ENCODE measurements at regions of chr11 and their contacts with region 1.

Region 1: GRCh38 chr11:96342961-96343711 is at the start of gene MAML2:
- DNase-seq: peak; percentile 83 to 97 (median 89)
- ATAC-seq: peak; percentile 88
- H3K4me3 ChIP-seq: peak within 1 kb of the TSS; percentile 92
- H3K4me3 Mint-ChIP-seq: peak within 1 kb of the TSS; percentile 97
- H3K27ac ChIP-seq: peak within 1 kb of the TSS; percentile 45 to 86
- H3K27ac Mint-ChIP-seq: peak within 1 kb of the TSS; percentile 87
- H3K4me1 ChIP-seq: peaks cover 43% of the 10 kb centered on the region
- H3K4me1 Mint-ChIP-seq: peaks cover 32% of the 10 kb centered on the region
- H3K27me3 ChIP-seq: no peaks in the 10 kb centered on the region
- H3K27me3 Mint-ChIP-seq: no peaks in the 10 kb centered on the region
- CTCF ChIP-seq: peak; percentile 96
- total RNA-seq, gene MAML2: 58.8 to 59.8 TPM

Region 2: DNA sequence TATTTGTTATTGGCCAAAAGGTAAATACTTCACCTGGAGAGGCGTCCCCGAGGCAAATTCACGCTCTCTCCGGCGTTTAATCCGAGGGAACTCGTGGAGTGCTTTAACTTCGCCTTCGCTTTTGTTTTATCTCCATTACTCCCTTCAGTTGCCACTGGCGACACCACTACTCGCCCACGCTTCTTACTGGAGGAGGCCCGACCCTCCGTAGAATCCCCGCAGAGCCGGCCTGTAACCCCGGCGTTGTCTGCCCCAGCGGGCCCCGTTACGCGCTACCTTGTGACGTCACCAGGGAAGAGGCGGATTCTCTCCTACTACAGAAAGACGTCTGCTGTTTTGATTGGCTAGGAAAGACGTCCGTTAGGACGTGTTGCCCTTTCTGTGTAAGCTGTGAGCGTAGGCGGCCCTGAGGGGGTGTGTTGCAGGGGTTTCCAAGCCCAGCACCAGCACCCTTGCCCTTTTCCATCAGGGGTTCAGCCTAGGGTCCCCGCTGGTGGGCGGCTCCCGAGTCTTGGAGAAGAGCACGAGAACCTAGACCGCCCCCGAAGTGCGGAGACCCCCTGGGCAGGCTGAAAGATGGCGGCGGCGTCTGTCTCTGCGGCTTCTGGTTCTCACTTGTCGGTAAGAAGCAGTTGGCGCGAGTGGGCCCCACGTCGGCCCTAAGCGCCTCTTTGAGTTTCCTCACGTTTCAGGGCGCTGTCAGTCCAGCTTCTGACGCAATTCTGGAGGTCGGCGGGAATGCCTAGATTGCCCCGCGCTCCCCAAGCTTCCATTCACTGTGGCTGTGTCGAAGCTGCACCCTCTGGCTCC is 552.8 kb before region 1 on chr11 and contains the start of gene CEP57:
- CTCF ChIA-PET with region 1: no interaction called
- POLR2A ChIA-PET with region 1: interaction called, 14 read pairs
- intact Hi-C with region 1: no loop called
- DNase-seq: peak; percentile 87 to 97 (median 90)
- ATAC-seq: peak; percentile 54
- H3K4me3 ChIP-seq: peak within 1 kb of the TSS; percentile 93
- H3K4me3 Mint-ChIP-seq: peak within 1 kb of the TSS; percentile 96
- H3K27ac ChIP-seq: peak within 1 kb of the TSS; percentile 99 to 100
- H3K27ac Mint-ChIP-seq: peak within 1 kb of the TSS; percentile 100
- H3K4me1 ChIP-seq: peaks cover 24% of the 10 kb centered on the region
- H3K4me1 Mint-ChIP-seq: peaks cover 61% of the 10 kb centered on the region
- H3K27me3 ChIP-seq: no peaks in the 10 kb centered on the region
- H3K27me3 Mint-ChIP-seq: no peaks in the 10 kb centered on the region
- CTCF ChIP-seq: no peak
- total RNA-seq, gene CEP57: 43.5 to 46.6 TPM

Region 3: GRCh38 chr11:96054870-96055705 is 288.0 kb before region 1 on chr11:
- CTCF ChIA-PET with region 1: interaction called, 24 read pairs
- POLR2A ChIA-PET with region 1: interaction called, 48 read pairs
- intact Hi-C with region 1: loop called (anchors 1 to 2 kb)
- DNase-seq: peak in 3 of 14 experiments; percentile 55 to 57 (median 57)
- ATAC-seq: peak; percentile 76
- H3K4me3 ChIP-seq: no peak overlapping the region
- H3K4me3 Mint-ChIP-seq: no peak overlapping the region
- H3K27ac ChIP-seq: no peak overlapping the region
- H3K27ac Mint-ChIP-seq: peak overlapping the region; percentile 26
- H3K4me1 ChIP-seq: peaks cover 2% of the 10 kb centered on the region
- H3K4me1 Mint-ChIP-seq: peaks cover 83% of the 10 kb centered on the region
- H3K27me3 ChIP-seq: no peaks in the 10 kb centered on the region
- H3K27me3 Mint-ChIP-seq: no peaks in the 10 kb centered on the region
- CTCF ChIP-seq: peak; percentile 65

Region 4: GRCh38 chr11:96207459-96208449 is 135.4 kb before region 1 on chr11:
- CTCF ChIA-PET with region 1: interaction called, 7 read pairs
- POLR2A ChIA-PET with region 1: interaction called, 51 read pairs
- intact Hi-C with region 1: loop called (anchors 5 kb)
- DNase-seq: peak in 10 of 14 experiments; percentile 12 to 84 (median 32)
- ATAC-seq: peak; percentile 68
- H3K4me3 ChIP-seq: peak overlapping the region; percentile 22
- H3K4me3 Mint-ChIP-seq: peak overlapping the region; percentile 72
- H3K27ac ChIP-seq: peak overlapping the region; percentile 62 to 78
- H3K27ac Mint-ChIP-seq: peak overlapping the region; percentile 94
- H3K4me1 ChIP-seq: peaks cover 57% of the 10 kb centered on the region
- H3K4me1 Mint-ChIP-seq: peaks cover 86% of the 10 kb centered on the region
- H3K27me3 ChIP-seq: no peaks in the 10 kb centered on the region
- H3K27me3 Mint-ChIP-seq: no peaks in the 10 kb centered on the region
- CTCF ChIP-seq: no peak

Region 5: GRCh38 chr11:96242971-96243647 is 100.0 kb before region 1 on chr11:
- CTCF ChIA-PET with region 1: interaction called, 38 read pairs
- POLR2A ChIA-PET with region 1: interaction called, 20 read pairs
- intact Hi-C with region 1: no loop called
- DNase-seq: peak; percentile 51 to 90 (median 68)
- ATAC-seq: peak; percentile 83
- H3K4me3 ChIP-seq: peak overlapping the region; percentile 57
- H3K4me3 Mint-ChIP-seq: peak overlapping the region; percentile 92
- H3K27ac ChIP-seq: peak overlapping the region; percentile 58 to 76
- H3K27ac Mint-ChIP-seq: peak overlapping the region; percentile 99
- H3K4me1 ChIP-seq: peaks cover 35% of the 10 kb centered on the region
- H3K4me1 Mint-ChIP-seq: peaks cover 69% of the 10 kb centered on the region
- H3K27me3 ChIP-seq: no peaks in the 10 kb centered on the region
- H3K27me3 Mint-ChIP-seq: no peaks in the 10 kb centered on the region
- CTCF ChIP-seq: no peak

Region 6: GRCh38 chr11:96279018-96279895 is 63.9 kb before region 1 on chr11:
- CTCF ChIA-PET with region 1: interaction called, 15 read pairs
- POLR2A ChIA-PET with region 1: interaction called, 4 read pairs
- intact Hi-C with region 1: loop called in 1 of 2 experiments (anchors 5 kb)
- DNase-seq: peak in 1 of 14 experiments; percentile 42
- ATAC-seq: peak; percentile 70
- H3K4me3 ChIP-seq: no peak overlapping the region
- H3K4me3 Mint-ChIP-seq: peak overlapping the region; percentile 18
- H3K27ac ChIP-seq: no peak overlapping the region
- H3K27ac Mint-ChIP-seq: peak overlapping the region; percentile 48
- H3K4me1 ChIP-seq: peaks cover 10% of the 10 kb centered on the region
- H3K4me1 Mint-ChIP-seq: peaks cover 75% of the 10 kb centered on the region
- H3K27me3 ChIP-seq: no peaks in the 10 kb centered on the region
- H3K27me3 Mint-ChIP-seq: no peaks in the 10 kb centered on the region
- CTCF ChIP-seq: no peak

Region 7: DNA sequence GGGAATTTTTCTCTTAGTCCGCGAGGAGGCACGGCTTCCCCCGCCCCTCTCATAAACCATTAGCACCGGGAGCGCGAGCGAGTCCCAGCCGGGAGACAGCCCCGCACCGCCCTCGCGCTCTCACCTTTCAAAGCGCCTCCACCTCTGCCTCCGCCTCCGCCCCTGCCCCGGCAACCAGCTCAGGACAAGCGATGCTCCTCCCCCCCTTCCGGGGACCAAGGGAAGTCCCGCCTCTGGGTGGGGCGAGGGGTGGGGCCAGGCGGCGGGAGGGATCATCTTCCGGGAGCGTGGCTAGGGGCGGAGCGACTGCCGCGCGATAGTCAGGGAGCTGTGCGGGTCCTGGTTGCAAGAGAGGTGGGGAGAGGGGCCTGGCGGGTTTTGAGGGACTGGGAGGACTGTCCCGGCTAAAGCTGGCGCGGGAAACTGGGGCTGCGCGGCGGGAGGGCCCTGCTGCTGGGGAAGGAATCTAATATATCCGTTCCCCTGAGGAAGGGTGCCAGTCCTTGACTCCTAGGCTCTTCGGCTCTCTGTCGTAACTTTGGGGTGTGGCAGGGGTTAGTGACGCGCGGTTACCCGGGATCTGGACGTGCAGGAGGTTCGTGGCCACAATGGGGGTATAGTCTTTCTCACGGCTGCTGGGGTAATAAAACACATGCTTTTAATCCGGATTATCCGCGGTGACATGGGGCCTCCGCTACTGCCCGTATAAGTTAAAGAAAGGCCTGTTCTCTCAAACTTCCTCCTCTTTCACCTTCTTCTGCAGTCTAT is 46.8 kb after region 1 on chr11 and contains the starts of genes CCDC82 and JRKL:
- CTCF ChIA-PET with region 1: interaction called, 28 read pairs
- POLR2A ChIA-PET with region 1: interaction called, 24 read pairs
- intact Hi-C with region 1: loop called (anchors 5 kb)
- DNase-seq: peak; percentile 96 to 99 (median 98)
- ATAC-seq: peak; percentile 96
- H3K4me3 ChIP-seq: peak within 1 kb of the TSS; percentile 86
- H3K4me3 Mint-ChIP-seq: peak within 1 kb of the TSS; percentile 91
- H3K27ac ChIP-seq: peak within 1 kb of the TSS; percentile 84
- H3K27ac Mint-ChIP-seq: peak within 1 kb of the TSS; percentile 88
- H3K4me1 ChIP-seq: peaks cover 18% of the 10 kb centered on the region
- H3K4me1 Mint-ChIP-seq: peaks cover 51% of the 10 kb centered on the region
- H3K27me3 ChIP-seq: no peaks in the 10 kb centered on the region
- H3K27me3 Mint-ChIP-seq: no peaks in the 10 kb centered on the region
- CTCF ChIP-seq: no peak
- total RNA-seq, gene CCDC82: 23.7 to 24.4 TPM
- total RNA-seq, gene JRKL: 3.0 to 3.5 TPM